Cardiac septum (tissue), 1 donor: ENCODE measurements at regions of chr17 and their contacts with region 1.

Region 1: GRCh38 chr17:78592991-78593329 is 15.8 kb upstream of the DNAH17 start:
- DNase-seq: no peak

Region 2: DNA sequence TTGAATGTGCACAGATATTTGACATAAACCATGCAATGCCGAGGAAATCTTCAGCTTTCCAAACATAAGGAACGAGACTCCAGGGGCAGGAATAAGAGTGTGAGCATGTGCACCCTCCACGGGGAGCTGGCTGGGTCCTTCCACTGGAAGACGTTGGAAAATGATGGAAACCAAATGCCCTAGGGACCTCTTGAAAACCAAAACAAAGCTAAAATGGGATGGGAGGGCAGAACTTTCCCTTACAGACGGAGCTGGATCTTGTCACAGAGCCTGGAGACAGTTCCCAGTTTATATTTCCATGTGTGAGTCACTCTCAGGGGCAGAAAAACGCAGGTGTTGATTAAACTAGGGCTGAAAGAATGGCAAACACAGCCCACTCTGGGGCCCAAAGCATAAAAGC is 18.6 kb after region 1 on chr17:
- intact Hi-C with region 1: loop called (anchors 1 kb)
- DNase-seq: no peak

Region 3: GRCh38 chr17:78645421-78646295 is 52.7 kb after region 1 on chr17:
- intact Hi-C with region 1: loop called (anchors 2 kb)
- DNase-seq: peak; percentile 92

Region 4: GRCh38 chr17:78736526-78737079 is 143.6 kb after region 1 on chr17:
- intact Hi-C with region 1: no loop called
- DNase-seq: peak; percentile 94

Region 5: GRCh38 chr17:78915872-78916632 is 323.1 kb after region 1 on chr17:
- intact Hi-C with region 1: no loop called
- DNase-seq: peak; percentile 87